B cell (primary cell): ENCODE measurements at regions of chr1 and their contacts with region 1.

Region 1: GRCh38 chr1:107213225-107213624 is 72.4 kb downstream of the NTNG1 start:
- DNase-seq: no peak
- ATAC-seq: no peak
- H3K4me3 ChIP-seq: no peak overlapping the region
- H3K4me3 Mint-ChIP-seq: no peak overlapping the region
- H3K27ac ChIP-seq: no peak overlapping the region
- H3K27ac Mint-ChIP-seq: no peak overlapping the region
- H3K4me1 ChIP-seq: no peaks in the 10 kb centered on the region
- H3K4me1 Mint-ChIP-seq: no peaks in the 10 kb centered on the region
- H3K27me3 ChIP-seq: no peaks in the 10 kb centered on the region
- H3K27me3 Mint-ChIP-seq: no peaks in the 10 kb centered on the region
- CTCF ChIP-seq: no peak

Region 2: GRCh38 chr1:107100331-107100984 is 112.8 kb before region 1 on chr1:
- CTCF ChIA-PET with region 1: no interaction called
- POLR2A ChIA-PET with region 1: no interaction called
- intact Hi-C with region 1: no loop called
- DNase-seq: no peak
- ATAC-seq: no peak
- H3K4me3 ChIP-seq: no peak overlapping the region
- H3K4me3 Mint-ChIP-seq: no peak overlapping the region
- H3K27ac ChIP-seq: no peak overlapping the region
- H3K27ac Mint-ChIP-seq: no peak overlapping the region
- H3K4me1 ChIP-seq: no peaks in the 10 kb centered on the region
- H3K4me1 Mint-ChIP-seq: peaks cover 4% of the 10 kb centered on the region
- H3K27me3 ChIP-seq: no peaks in the 10 kb centered on the region
- H3K27me3 Mint-ChIP-seq: peaks cover 13% of the 10 kb centered on the region
- CTCF ChIP-seq: no peak

Region 3: DNA sequence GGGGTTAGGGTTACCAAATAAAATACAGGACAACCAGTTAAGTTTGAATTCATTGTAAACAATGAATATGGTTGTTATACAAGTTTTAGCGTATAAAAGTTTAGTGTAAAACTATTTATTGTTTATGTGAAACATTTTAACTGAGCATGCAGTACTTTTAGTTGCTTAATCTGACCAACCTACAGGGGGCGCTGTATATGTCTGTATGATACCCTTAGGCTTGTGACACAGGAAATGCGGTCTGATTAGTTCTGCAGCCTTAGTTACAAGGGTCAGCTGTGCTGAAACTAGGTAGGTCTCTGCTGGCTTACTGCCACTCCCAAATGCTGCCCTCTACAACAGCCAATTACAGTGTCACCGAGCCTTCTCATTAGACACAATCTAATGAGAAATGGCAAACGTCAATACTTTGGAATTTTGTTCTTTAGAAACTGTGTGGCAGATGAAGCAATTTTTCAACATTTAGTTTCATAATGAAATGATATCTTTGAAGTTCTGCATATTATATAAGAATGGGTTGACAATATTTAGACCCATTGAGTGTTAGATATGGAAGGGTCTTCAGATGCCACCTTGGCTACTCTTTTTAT is 16.2 kb before region 1 on chr1:
- CTCF ChIA-PET with region 1: interaction called, 10 read pairs
- POLR2A ChIA-PET with region 1: no interaction called
- intact Hi-C with region 1: no loop called
- DNase-seq: peak; percentile 68
- ATAC-seq: peak; percentile 60
- H3K4me3 ChIP-seq: no peak overlapping the region
- H3K4me3 Mint-ChIP-seq: no peak overlapping the region
- H3K27ac ChIP-seq: no peak overlapping the region
- H3K27ac Mint-ChIP-seq: no peak overlapping the region
- H3K4me1 ChIP-seq: peaks cover 0 to 3% of the 10 kb centered on the region in 2 donors
- H3K4me1 Mint-ChIP-seq: peaks cover 3% of the 10 kb centered on the region
- H3K27me3 ChIP-seq: no peaks in the 10 kb centered on the region
- H3K27me3 Mint-ChIP-seq: no peaks in the 10 kb centered on the region
- CTCF ChIP-seq: peak; percentile 71

Region 4: DNA sequence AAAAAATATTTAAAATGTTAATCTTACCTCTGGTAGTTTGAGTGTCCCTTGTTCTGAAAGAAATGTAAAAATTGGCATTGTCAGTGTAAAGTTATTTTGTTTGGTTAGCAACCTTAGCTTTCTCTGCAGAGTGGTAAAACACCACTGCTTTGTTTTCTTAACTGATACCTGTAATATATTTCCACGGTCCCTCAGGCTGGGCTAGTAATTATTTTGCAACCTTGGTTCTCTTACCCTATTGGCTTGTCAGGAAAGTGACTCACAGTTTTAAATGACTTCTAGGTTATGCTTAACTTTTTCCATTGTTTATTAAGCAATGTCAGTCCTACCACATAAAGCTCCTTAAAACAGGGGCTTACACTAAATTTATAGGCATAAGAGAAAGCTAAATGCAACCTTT is 475.1 kb after region 1 on chr1:
- CTCF ChIA-PET with region 1: no interaction called
- POLR2A ChIA-PET with region 1: no interaction called
- intact Hi-C with region 1: no loop called
- DNase-seq: no peak
- ATAC-seq: no peak
- H3K4me3 ChIP-seq: no peak overlapping the region
- H3K4me3 Mint-ChIP-seq: no peak overlapping the region
- H3K27ac ChIP-seq: no peak overlapping the region
- H3K27ac Mint-ChIP-seq: no peak overlapping the region
- H3K4me1 ChIP-seq: no peaks in the 10 kb centered on the region
- H3K4me1 Mint-ChIP-seq: no peaks in the 10 kb centered on the region
- H3K27me3 ChIP-seq: no peaks in the 10 kb centered on the region
- H3K27me3 Mint-ChIP-seq: no peaks in the 10 kb centered on the region
- CTCF ChIP-seq: no peak